Activated CD8-positive, alpha-beta T cell treated with anti-CD3 and anti-CD28 coated beads, Interleukin-2, amount 10 ng/mL, durations not matched to agents 7 days and 5 days (primary cell): ENCODE measurements at regions of chr11 and their contacts with region 1.

Region 1: GRCh38 chr11:73982969-73983740 is 512 bp upstream of the UCP2 start:
- DNase-seq: peak; percentile 97
- ATAC-seq: peak; percentile 80
- H3K4me3 Mint-ChIP-seq: peak overlapping the region; percentile 87
- H3K27ac Mint-ChIP-seq: peak overlapping the region; percentile 95
- H3K4me1 Mint-ChIP-seq: peaks cover 48% of the 10 kb centered on the region
- H3K27me3 Mint-ChIP-seq: no peaks in the 10 kb centered on the region

Region 2: GRCh38 chr11:73965076-73965860 is 17.9 kb before region 1 on chr11:
- CTCF ChIA-PET with region 1: interaction called, 29 read pairs
- POLR2A ChIA-PET with region 1: interaction called, 135 read pairs
- DNase-seq: no peak
- ATAC-seq: no peak
- H3K4me3 Mint-ChIP-seq: no peak overlapping the region
- H3K27ac Mint-ChIP-seq: no peak overlapping the region
- H3K4me1 Mint-ChIP-seq: peaks cover 31% of the 10 kb centered on the region
- H3K27me3 Mint-ChIP-seq: no peaks in the 10 kb centered on the region

Region 3: DNA sequence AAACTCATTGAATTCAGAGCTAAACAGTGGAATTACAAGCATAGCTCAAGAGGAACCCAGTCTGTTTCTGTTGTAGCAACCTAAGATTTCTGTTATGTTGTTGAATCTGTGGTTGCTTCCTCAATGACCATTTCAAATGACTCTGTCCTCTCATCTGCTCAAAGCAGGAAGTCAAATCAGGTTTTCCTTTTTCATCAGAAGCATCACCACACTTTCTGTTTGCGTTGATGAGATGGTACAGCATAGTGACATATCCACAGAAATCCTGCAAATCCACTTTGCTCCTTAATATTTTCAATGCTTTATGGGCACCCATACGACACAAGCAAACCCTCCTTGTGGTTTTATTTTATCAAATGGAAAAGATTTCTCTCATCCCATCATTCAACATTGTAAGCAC is 12.1 kb after region 1 on chr11:
- CTCF ChIA-PET with region 1: interaction called, 20 read pairs
- POLR2A ChIA-PET with region 1: interaction called, 187 read pairs
- DNase-seq: peak; percentile 56
- ATAC-seq: peak; percentile 79
- H3K4me3 Mint-ChIP-seq: peak overlapping the region; percentile 72
- H3K27ac Mint-ChIP-seq: peak overlapping the region; percentile 94
- H3K4me1 Mint-ChIP-seq: peaks cover 70% of the 10 kb centered on the region
- H3K27me3 Mint-ChIP-seq: no peaks in the 10 kb centered on the region

Region 4: DNA sequence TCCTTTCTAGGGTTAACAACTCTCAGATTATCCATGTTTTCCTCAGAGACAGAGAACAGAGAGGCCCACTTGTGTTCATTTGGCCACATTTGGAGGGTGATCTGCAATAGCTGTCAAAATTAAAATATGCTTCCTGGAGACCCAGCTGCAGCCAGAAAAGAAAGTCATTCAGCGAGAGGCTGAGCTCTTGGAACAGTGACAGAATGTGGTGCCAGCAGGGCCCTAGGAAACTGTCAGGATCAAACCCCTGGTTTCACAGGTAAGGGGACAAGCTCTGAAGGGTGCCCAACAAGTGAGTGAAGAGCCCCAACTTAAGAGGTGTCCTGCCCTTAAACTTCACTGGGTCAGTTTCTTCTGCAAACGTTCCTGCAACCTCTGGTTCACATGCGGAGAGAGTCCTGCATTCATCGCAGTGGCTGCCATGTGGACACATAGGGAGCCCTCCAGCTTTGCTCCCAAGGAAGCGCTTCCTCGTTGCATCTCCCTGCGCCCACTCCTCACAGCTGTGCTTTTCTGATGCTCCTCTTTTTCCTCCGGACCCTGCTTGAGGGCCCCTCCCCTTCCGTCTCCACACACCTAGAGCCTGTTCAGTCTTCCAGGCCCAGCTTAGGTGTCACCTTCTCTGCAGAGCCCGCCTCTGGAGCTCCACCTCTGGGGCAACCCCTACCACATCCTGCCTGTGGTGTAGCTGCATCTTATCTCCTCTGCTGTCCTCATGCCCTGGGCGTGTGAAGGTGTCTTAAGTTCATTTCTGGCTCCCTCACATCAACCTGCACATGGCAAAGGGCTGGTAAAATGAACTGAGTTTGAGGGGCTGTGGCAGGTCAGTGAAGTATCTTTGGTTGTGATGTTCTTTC is 21.8 kb after region 1 on chr11:
- CTCF ChIA-PET with region 1: interaction called, 10 read pairs
- POLR2A ChIA-PET with region 1: interaction called, 66 read pairs
- DNase-seq: peak; percentile 96
- ATAC-seq: peak; percentile 99
- H3K4me3 Mint-ChIP-seq: peak overlapping the region; percentile 62
- H3K27ac Mint-ChIP-seq: peak overlapping the region; percentile 87
- H3K4me1 Mint-ChIP-seq: peaks cover 66% of the 10 kb centered on the region
- H3K27me3 Mint-ChIP-seq: no peaks in the 10 kb centered on the region

Region 5: DNA sequence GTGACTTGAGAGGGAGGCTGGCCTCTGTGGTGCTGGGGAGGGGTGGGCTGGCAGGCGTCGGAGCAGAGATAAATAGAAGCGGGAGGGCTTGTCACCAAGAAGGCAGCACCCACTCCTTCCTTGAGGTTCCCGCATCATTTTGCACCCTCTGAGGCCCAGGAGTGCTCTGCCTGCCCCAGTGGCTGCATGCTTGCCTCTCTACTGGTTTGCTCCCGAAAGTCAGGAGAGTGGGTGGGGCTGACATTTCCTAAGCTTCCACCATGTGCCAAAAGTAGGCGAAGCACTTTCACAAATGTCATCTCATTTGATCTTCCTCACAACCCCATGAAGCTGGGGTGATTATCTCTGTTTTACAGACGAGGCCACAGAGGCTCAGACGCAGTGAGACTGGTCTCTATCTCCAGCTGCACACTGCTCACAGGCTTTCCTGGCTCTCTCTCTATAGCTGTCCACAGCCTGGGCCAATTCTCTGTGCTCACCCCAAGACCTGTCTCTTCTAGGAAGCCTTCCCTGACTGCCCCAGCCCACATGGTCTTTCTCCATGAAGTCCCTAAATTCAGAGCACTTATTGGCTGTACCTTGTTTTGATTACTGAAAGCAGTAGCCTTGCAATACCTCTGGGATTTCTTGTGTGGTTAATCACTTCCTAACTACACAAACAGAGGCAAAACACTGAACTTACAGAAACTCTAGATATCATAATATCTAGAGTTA is 28.4 kb after region 1 on chr11:
- CTCF ChIA-PET with region 1: interaction called, 4 read pairs
- POLR2A ChIA-PET with region 1: interaction called, 26 read pairs
- DNase-seq: no peak
- ATAC-seq: peak; percentile 81
- H3K4me3 Mint-ChIP-seq: no peak overlapping the region
- H3K27ac Mint-ChIP-seq: peak overlapping the region; percentile 75
- H3K4me1 Mint-ChIP-seq: peaks cover 70% of the 10 kb centered on the region
- H3K27me3 Mint-ChIP-seq: no peaks in the 10 kb centered on the region